ENCODE measurements at regions of chr4 and their contacts with region 1.

Region 1: DNA sequence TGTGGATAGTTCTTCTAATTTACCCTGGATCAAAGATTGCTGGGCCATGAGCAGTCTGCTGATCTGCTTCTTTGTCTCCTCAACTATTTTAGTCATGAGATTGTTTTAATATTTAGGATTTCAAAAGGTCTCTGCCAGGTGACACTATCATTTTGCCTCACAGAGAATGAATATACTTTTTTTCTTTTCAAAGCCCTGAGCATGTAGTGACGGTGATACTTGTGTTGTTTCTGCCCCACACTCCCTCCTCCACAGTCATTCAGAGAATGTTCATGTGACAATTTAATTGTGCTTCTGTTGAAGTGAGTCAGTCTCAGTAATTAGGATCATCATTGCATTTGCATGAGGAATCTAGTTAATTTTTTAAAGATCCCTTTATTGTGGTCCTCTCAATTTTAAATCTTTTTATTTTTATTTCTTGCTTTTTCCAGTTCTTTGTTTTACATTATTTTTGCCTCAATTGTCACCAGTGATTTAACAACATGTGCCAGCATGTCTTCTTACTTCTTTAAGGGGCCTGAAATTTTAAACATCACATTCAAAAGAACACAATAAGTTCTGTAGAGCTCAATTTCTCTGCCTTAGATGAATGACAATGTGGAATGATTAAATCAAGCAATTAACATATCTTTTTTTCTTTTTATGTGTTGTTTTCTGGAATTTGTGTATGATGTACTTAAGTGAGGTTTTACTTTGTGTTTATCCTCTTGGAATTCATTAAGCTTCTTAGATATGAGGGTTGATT is 12.3 kb downstream of the MMRN1 start:
- DNase-seq: no peak
- ATAC-seq: no peak
- H3K4me3 ChIP-seq: no peak overlapping the region
- H3K27ac ChIP-seq: no peak overlapping the region
- H3K4me1 ChIP-seq: peaks cover 0 to 5% (median 0%) of the 10 kb centered on the region in 12 donors
- H3K27me3 ChIP-seq: no peaks in the 10 kb centered on the region
- CTCF ChIP-seq: no peak
- POLR2A ChIP-seq: no peak

Region 2: DNA sequence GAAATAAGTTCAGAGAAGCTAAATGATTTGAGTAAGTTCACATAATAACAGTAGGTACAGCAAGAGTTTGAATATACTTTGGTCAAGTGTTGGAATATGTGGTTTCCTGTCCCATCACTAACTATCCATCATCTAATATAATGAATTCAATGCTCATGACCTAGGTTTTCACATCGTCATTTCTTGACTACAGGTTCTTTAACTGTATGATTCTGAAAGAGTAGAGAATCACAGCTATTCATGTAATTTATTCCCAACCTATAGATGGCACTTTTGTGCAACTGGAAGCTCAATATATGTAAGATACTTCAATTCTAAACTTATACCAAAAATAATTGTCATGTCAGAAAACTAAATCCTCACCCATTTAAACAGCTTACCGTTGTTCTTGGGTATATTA is 742.5 kb before region 1 on chr4:
- intact Hi-C with region 1: loop called in 3 of 10 experiments (anchors 5 to 10 kb)
- DNase-seq: no peak
- ATAC-seq: no peak
- H3K4me3 ChIP-seq: no peak overlapping the region
- H3K27ac ChIP-seq: no peak overlapping the region
- H3K4me1 ChIP-seq: no peaks in the 10 kb centered on the region
- H3K27me3 ChIP-seq: no peaks in the 10 kb centered on the region
- CTCF ChIP-seq: no peak
- POLR2A ChIP-seq: no peak

Region 3: DNA sequence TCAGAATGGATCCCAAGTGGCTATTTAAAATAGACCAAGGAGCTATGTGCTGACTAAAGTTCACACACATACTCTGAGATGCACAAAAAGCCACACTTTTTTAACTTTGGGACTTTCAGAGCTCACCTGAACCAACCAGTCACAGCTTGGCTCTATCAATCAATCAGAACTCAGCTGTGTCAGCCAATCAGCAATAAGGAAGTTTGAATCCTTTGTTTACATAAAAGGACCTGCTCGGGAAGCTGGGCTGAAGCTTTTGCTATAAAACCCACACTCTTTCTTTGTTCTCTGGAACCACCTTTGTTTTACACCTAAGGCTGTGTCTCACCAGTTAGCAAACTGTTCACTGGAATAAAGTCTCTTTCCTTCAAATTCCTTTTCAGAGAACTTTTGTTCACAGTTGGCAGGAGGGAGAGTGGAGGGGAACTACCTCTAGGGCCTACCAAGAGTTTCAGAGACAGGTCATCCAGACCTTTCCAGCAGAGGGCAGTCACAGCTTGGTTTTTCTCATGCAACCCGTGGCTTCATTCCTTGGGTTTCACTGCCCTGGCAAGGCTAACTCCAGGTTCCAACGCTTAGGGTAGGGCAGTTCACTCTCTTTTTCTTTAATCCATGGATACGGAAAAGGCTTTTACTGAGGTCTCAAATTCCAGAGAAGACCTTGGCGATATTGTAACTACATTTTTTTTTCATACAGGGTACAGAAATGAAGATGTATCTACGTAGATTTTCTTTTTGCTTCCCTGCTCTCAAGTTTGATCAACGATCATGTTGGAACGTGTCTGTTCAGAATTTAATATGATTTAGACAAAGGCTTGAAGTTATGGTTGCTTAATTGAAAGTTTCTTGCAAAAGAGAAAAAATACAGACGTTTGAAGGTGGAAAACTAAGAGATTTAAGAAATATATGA is 680.0 kb before region 1 on chr4:
- intact Hi-C with region 1: loop called in 5 of 10 experiments (anchors 2 to 10 kb)
- DNase-seq: peak; percentile 70 to 83 (median 79)
- ATAC-seq: peak; percentile 90 to 99 (median 96)
- H3K4me3 ChIP-seq: no peak overlapping the region
- H3K27ac ChIP-seq: no peak overlapping the region
- H3K4me1 ChIP-seq: peaks cover 0 to 3% (median 0%) of the 10 kb centered on the region in 12 donors
- H3K27me3 ChIP-seq: no peaks in the 10 kb centered on the region
- CTCF ChIP-seq: peak; percentile 55 to 82 (median 72)
- POLR2A ChIP-seq: no peak

Region 4: DNA sequence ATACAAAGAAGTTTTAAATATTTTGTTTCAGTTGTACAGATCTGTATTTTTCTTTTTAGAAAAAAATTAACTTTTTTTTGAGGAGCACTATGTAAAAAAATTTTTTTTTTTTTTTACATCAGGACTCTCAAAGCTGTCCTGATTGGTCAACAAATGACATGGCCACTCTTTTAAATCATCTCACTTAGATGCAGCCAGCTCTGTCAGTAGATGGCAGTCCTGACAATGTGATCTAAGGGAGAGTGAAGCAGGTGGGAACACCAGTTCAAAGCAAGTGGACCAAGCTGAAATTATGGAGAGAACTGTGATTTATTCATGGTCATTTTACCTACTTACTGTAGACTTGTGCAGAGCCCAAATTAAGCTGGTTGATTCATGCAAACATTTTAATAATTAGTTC is 424.7 kb before region 1 on chr4:
- intact Hi-C with region 1: loop called in 5 of 10 experiments (anchors 5 to 10 kb)
- DNase-seq: no peak
- ATAC-seq: peak in 3 of 4 donors; percentile 45 to 70 (median 64)
- H3K4me3 ChIP-seq: no peak overlapping the region
- H3K27ac ChIP-seq: no peak overlapping the region
- H3K4me1 ChIP-seq: no peaks in the 10 kb centered on the region
- H3K27me3 ChIP-seq: no peaks in the 10 kb centered on the region
- CTCF ChIP-seq: peak in 5 of 12 donors; percentile 9 to 33 (median 26)
- POLR2A ChIP-seq: no peak

Region 5: DNA sequence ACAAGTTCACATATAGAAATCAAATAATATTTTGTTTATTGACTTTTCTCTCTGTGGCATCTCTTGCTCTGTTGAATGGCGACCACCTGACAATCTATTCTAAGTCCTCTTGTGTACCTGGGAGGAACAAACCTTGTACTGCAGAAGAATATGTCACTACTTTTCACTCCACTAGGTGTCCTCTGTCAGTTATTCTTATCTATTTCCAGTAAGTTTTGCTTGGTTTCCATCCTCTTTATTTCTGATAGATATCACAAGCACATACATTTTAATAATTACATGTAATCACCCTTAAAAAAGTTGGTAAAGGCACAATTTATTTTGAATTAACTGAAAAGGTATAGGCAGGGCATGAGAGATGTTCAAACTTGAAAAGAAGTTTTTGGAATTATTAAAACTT is 308.3 kb before region 1 on chr4:
- intact Hi-C with region 1: loop called in 1 of 10 experiments (anchors 10 kb)
- DNase-seq: no peak
- ATAC-seq: no peak
- H3K4me3 ChIP-seq: no peak overlapping the region
- H3K27ac ChIP-seq: no peak overlapping the region
- H3K4me1 ChIP-seq: no peaks in the 10 kb centered on the region
- H3K27me3 ChIP-seq: no peaks in the 10 kb centered on the region
- CTCF ChIP-seq: peak in 3 of 12 donors; percentile 12 to 19 (median 15)
- POLR2A ChIP-seq: no peak

Region 6: GRCh38 chr4:89640620-89641366 is 266.2 kb before region 1 on chr4:
- intact Hi-C with region 1: loop called in 1 of 10 experiments (anchors 5 kb)
- DNase-seq: peak; percentile 9 to 54 (median 41)
- ATAC-seq: peak in 3 of 4 donors; percentile 69 to 80 (median 75)
- H3K4me3 ChIP-seq: peak overlapping the region in 7 of 12 donors; percentile 11 to 36 (median 25)
- H3K27ac ChIP-seq: no peak overlapping the region
- H3K4me1 ChIP-seq: no peaks in the 10 kb centered on the region
- H3K27me3 ChIP-seq: peaks cover 0 to 4% (median 0%) of the 10 kb centered on the region in 9 donors
- CTCF ChIP-seq: peak in 11 of 12 donors; percentile 31 to 56 (median 44)
- POLR2A ChIP-seq: no peak

Region 7: DNA sequence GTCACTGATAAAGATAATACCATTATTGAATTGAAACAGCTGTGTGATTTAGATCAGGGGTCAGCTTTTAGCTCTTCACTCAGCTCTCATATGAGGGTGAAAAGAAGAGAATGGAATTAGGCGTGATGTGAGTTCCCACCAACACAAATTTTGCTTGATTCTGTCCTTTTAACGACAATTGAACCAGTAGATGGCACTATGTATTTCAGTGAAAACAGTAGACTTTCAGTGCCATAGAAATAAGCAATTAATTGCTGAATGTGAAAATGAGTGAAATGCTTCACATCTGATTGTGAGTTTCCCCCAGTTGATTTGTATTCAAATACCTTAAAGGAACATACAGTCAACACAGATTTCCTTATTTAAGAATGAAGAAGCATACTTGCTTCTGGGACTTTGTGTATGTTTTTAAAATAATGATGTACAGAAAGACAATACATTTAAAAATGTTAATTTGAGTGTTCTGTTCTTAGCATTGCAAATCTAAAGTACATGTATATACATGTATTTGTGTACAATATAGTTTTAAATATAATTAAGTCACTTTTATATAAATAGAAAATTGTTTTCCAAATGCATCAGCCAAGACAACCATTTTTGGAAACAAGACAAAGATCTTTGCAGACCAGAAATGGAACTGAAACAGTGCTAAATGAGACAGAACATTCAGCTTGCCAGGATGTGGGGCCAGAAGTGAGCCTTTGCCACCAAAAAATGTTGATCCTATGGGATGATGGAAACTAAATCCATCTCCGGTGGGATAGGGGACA is 248.8 kb before region 1 on chr4:
- intact Hi-C with region 1: loop called in 2 of 10 experiments (anchors 5 to 10 kb)
- DNase-seq: no peak
- ATAC-seq: no peak
- H3K4me3 ChIP-seq: no peak overlapping the region
- H3K27ac ChIP-seq: no peak overlapping the region
- H3K4me1 ChIP-seq: peaks cover 0 to 5% (median 0%) of the 10 kb centered on the region in 12 donors
- H3K27me3 ChIP-seq: no peaks in the 10 kb centered on the region
- CTCF ChIP-seq: peak in 10 of 12 donors; percentile 19 to 58 (median 39)
- POLR2A ChIP-seq: no peak

Region 8: DNA sequence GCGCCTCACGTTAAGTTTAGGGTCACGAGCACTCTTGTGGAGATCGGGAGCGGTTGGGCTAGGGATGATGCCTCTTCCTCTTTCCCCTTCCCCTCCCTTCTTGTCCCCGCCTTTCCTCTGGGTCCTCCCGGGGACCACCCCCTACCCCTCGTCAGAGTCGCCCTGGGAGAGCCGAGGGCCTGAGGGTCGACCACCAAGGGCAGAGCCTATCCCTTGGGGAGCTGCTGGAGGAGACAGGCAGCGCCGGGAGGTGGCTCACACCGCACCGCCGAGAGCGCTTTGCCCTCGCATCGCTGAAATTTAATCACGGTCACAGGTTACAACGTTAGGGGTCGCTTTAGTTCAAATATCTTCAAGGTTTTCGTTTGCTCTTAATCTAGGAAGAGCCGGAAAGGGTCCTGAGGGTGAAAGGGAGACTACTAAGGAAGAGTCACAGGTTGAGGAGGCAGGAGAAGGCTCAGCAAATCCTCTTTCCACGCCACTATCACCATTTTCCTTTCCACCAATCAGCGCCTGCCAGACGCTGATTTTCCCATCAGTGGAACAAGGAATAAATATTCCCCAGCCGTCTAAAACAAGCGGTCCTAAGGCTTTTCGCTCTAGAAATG is 69.5 kb before region 1 on chr4:
- intact Hi-C with region 1: no loop called
- DNase-seq: peak in 3 of 5 donors; percentile 10 to 62 (median 26)
- ATAC-seq: peak; percentile 30 to 73 (median 63)
- H3K4me3 ChIP-seq: peak overlapping the region; percentile 12 to 72 (median 56)
- H3K27ac ChIP-seq: peak overlapping the region in 3 of 12 donors; percentile 26 to 61 (median 33)
- H3K4me1 ChIP-seq: peaks cover 0 to 20% (median 2%) of the 10 kb centered on the region in 12 donors
- H3K27me3 ChIP-seq: peaks cover 0 to 65% (median 24%) of the 10 kb centered on the region in 9 donors
- CTCF ChIP-seq: peak in 1 of 12 donors; percentile 17
- POLR2A ChIP-seq: no peak